Caco-2 (cell line): ENCODE measurements at regions of chr5 and their contacts with region 1.

Region 1: DNA sequence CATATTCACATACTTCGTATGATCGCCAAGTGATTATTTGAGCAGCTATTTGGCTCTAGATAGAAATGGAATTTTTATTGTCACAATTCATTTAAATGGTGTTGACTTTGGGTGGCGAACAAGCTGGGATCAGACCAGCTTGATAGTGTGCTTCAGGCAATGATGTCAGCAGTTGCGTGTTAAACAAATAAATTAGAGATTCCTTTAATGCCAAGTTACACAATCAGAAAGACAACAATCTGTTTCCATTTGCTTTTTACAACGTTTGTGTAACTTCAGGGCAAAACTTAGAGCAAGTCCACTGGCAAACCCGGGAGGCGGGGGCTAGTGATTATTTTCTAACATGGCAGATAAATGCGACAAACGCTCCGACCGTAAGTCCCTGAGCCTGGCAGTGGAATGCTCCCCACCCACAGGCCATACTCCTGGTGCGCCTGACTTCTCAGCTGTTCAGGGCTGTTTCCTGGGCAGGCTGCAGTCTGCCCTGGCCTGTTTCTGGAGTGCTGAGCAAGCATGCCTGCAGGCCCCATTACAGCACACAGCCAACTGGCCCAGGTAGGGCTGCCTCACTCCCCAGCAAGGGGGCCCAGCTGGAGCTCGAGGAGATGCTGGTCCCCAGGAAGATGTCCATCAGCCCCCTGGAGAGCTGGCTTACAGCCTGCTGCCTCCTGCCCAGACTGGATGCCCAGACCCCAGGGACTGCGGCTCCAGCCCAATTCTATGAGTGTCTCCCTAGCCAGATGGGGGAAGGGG is 88.7 kb downstream of the BASP1 start:
- DNase-seq: peak; percentile 90 to 91
- H3K4me3 ChIP-seq: peak overlapping the region; percentile 2; the same call in 1 of the 2 replicates
- H3K4me3 Mint-ChIP-seq: peak overlapping the region; percentile 61
- H3K27ac Mint-ChIP-seq: peak overlapping the region; percentile 93
- H3K4me1 ChIP-seq: peaks cover 32% of the 10 kb centered on the region
- H3K4me1 Mint-ChIP-seq: peaks cover 35% of the 10 kb centered on the region
- H3K27me3 ChIP-seq: no peaks in the 10 kb centered on the region
- H3K27me3 Mint-ChIP-seq: no peaks in the 10 kb centered on the region
- CTCF ChIP-seq: no peak

Region 2: GRCh38 chr5:17206037-17206436 is 100.1 kb before region 1 on chr5:
- CTCF ChIA-PET with region 1: no interaction called
- POLR2A ChIA-PET with region 1: no interaction called
- intact Hi-C with region 1: no loop called
- DNase-seq: no peak
- H3K4me3 ChIP-seq: no peak overlapping the region
- H3K4me3 Mint-ChIP-seq: no peak overlapping the region
- H3K27ac Mint-ChIP-seq: no peak overlapping the region
- H3K4me1 ChIP-seq: no peaks in the 10 kb centered on the region; the same call in 1 of the 2 replicates
- H3K4me1 Mint-ChIP-seq: peaks cover 13% of the 10 kb centered on the region
- H3K27me3 ChIP-seq: no peaks in the 10 kb centered on the region
- H3K27me3 Mint-ChIP-seq: no peaks in the 10 kb centered on the region
- CTCF ChIP-seq: no peak

Region 3: GRCh38 chr5:17224858-17225511 is 81.2 kb before region 1 on chr5:
- CTCF ChIA-PET with region 1: no interaction called
- POLR2A ChIA-PET with region 1: no interaction called
- intact Hi-C with region 1: loop called (anchors 1 kb)
- DNase-seq: no peak
- H3K4me3 ChIP-seq: no peak overlapping the region
- H3K4me3 Mint-ChIP-seq: peak overlapping the region; percentile 57
- H3K27ac Mint-ChIP-seq: peak overlapping the region; percentile 76
- H3K4me1 ChIP-seq: peaks cover 43% of the 10 kb centered on the region
- H3K4me1 Mint-ChIP-seq: peaks cover 50% of the 10 kb centered on the region
- H3K27me3 ChIP-seq: no peaks in the 10 kb centered on the region
- H3K27me3 Mint-ChIP-seq: no peaks in the 10 kb centered on the region
- CTCF ChIP-seq: no peak

Region 4: GRCh38 chr5:17290055-17290974 is 15.8 kb before region 1 on chr5:
- CTCF ChIA-PET with region 1: no interaction called
- POLR2A ChIA-PET with region 1: interaction called, 4 read pairs
- intact Hi-C with region 1: loop called (anchors 1 kb)
- DNase-seq: peak; percentile 39 to 51
- H3K4me3 ChIP-seq: no peak overlapping the region
- H3K4me3 Mint-ChIP-seq: no peak overlapping the region
- H3K27ac Mint-ChIP-seq: peak overlapping the region; percentile 77
- H3K4me1 ChIP-seq: peaks cover 16% of the 10 kb centered on the region
- H3K4me1 Mint-ChIP-seq: peaks cover 31% of the 10 kb centered on the region
- H3K27me3 ChIP-seq: no peaks in the 10 kb centered on the region
- H3K27me3 Mint-ChIP-seq: no peaks in the 10 kb centered on the region
- CTCF ChIP-seq: no peak

Region 5: GRCh38 chr5:17326600-17327037 is 20.5 kb after region 1 on chr5:
- CTCF ChIA-PET with region 1: no interaction called
- POLR2A ChIA-PET with region 1: interaction called, 3 read pairs
- intact Hi-C with region 1: loop called (anchors 1 kb)
- DNase-seq: peak; percentile 60 to 64
- H3K4me3 ChIP-seq: no peak overlapping the region
- H3K4me3 Mint-ChIP-seq: no peak overlapping the region
- H3K27ac Mint-ChIP-seq: no peak overlapping the region
- H3K4me1 ChIP-seq: peaks cover 38% of the 10 kb centered on the region
- H3K4me1 Mint-ChIP-seq: peaks cover 31% of the 10 kb centered on the region
- H3K27me3 ChIP-seq: no peaks in the 10 kb centered on the region
- H3K27me3 Mint-ChIP-seq: no peaks in the 10 kb centered on the region
- CTCF ChIP-seq: no peak